Activated B cell treated with CpG ODN at 0.5 μM for 24 hours (primary cell): ENCODE measurements at regions of chr12 and their contacts with region 1.

Region 1: GRCh38 chr12:46372544-46373110 is at the start of gene SLC38A2:
- DNase-seq: peak; percentile 97
- ATAC-seq: peak; percentile 88
- H3K4me3 Mint-ChIP-seq: peak within 1 kb of the TSS; percentile 96
- H3K27ac Mint-ChIP-seq: peak within 1 kb of the TSS; percentile 99
- H3K4me1 Mint-ChIP-seq: peaks cover 46% of the 10 kb centered on the region
- H3K27me3 Mint-ChIP-seq: no peaks in the 10 kb centered on the region
- CTCF ChIP-seq: no peak
- total RNA-seq, gene SLC38A2: 231 and 247 TPM in 2 replicates

Region 2: DNA sequence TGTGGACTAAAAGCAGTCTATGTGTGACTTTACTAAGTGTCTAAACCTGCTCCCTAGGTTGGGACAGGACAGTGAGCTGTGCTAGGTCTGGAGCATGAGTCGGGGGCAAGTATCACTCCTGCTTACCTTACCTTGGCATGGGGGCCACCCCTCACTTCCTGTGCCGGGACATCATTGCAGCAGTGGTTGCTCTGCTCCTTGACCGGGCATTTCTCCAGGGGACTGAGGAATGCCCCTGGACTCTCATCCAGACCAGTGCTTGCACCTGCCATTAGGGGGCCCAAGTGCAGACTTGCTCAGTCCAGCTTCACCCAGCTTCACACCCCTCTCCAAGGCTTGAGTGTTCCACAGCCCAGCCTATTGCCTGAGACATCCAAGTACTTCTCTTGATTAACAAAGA is 1411.8 kb before region 1 on chr12:
- CTCF ChIA-PET with region 1: no interaction called
- POLR2A ChIA-PET with region 1: no interaction called
- intact Hi-C with region 1: no loop called
- DNase-seq: no peak
- ATAC-seq: no peak
- H3K4me3 Mint-ChIP-seq: no peak overlapping the region
- H3K27ac Mint-ChIP-seq: no peak overlapping the region
- H3K4me1 Mint-ChIP-seq: no peaks in the 10 kb centered on the region
- H3K27me3 Mint-ChIP-seq: no peaks in the 10 kb centered on the region
- CTCF ChIP-seq: no peak

Region 3: DNA sequence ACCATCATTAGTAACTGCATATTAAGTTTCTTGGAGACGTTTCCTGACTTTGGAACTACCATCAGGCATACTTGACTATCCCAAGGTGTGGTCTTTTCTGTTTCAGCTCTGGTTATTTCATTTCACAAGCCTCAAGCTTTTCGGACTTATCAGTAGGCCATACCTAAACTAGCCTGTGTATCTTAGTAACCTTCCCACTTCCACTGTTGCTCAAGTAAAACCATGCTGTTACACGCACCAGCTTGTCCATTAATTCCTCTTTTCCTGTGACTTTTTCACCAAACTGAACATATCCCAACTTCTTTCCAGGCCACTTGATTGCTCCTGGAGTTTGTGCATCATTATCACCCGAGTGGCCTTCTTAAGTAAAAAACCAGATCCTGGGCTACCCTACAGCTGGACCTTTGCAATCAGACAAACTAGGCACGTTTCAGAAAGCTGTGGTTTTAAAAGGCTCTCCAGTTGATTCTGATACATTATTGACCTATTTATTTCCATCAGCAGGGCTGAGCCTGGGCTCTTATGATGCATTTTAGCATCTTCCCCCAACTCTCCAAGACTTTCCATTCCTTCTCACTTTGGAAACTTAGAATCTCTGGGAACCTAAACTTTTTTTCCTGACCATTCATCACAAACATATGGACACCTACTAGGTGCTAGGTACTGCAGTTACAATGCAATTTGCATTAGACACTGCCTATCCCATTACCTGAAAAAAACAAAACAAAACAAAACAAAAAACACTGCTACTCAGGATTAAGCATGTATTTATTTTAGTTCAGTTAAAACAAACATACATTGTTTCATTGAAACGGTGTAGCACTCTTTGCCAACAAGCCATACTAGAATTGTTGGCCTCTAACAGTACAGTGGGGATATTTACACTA is 14.9 kb before region 1 on chr12:
- CTCF ChIA-PET with region 1: interaction called, 3 read pairs
- POLR2A ChIA-PET with region 1: interaction called, 5 read pairs
- intact Hi-C with region 1: loop called (anchors 1 kb)
- DNase-seq: no peak
- ATAC-seq: no peak
- H3K4me3 Mint-ChIP-seq: no peak overlapping the region
- H3K27ac Mint-ChIP-seq: no peak overlapping the region
- H3K4me1 Mint-ChIP-seq: peaks cover 32% of the 10 kb centered on the region
- H3K27me3 Mint-ChIP-seq: no peaks in the 10 kb centered on the region
- CTCF ChIP-seq: no peak

Region 4: DNA sequence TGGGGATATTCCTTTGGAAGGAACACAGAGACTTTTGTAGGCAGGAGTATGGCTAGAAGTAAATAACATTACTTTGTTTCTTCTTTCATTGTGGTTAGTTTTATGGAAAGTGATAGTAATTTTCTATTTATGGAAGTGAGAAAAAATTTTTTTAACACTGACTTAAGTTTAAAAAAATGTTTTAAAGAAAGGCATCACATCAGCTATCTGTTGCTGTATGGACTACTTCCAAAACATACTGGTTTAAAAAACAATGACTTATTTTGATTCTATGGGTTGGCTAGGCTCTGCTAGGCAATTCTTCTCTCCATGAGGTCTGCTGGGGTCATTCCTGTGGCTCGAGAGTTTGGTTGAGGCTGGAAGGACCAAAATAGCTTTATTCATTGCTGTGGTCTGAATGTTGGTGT is 31.6 kb after region 1 on chr12:
- CTCF ChIA-PET with region 1: no interaction called
- POLR2A ChIA-PET with region 1: no interaction called
- intact Hi-C with region 1: loop called (anchors 2 kb)
- DNase-seq: no peak
- ATAC-seq: no peak
- H3K4me3 Mint-ChIP-seq: no peak overlapping the region
- H3K27ac Mint-ChIP-seq: no peak overlapping the region
- H3K4me1 Mint-ChIP-seq: peaks cover 48% of the 10 kb centered on the region
- H3K27me3 Mint-ChIP-seq: no peaks in the 10 kb centered on the region
- CTCF ChIP-seq: no peak

Region 5: DNA sequence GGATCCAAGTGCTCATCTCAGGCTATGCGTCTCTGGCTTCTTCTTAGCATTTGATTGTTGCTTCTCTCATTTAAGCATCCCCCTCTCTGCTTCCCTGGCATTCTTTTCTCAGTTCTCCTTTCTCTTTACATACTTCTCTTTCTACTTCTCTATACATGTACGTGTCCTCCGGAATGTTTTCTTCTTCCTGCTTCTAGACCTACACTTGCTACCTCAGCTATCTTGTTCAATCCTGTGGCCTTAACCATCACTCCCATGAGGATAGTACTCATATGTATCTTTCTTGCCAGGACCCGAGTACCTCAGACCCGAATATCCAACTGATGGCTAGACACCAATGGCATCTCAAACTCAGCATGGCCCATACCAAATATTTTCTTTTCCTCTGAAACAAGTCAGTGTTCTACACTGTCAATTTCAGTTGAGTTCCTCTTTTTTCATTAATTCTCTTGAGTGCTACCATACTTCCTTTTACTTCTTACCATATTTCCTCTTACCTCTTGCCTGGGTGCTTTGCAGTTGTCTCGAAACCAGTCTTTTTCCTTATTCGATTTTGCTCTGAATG is 115.0 kb after region 1 on chr12:
- CTCF ChIA-PET with region 1: no interaction called
- POLR2A ChIA-PET with region 1: no interaction called
- intact Hi-C with region 1: loop called (anchors 1 kb)
- DNase-seq: no peak
- ATAC-seq: peak; percentile 92
- H3K4me3 Mint-ChIP-seq: no peak overlapping the region
- H3K27ac Mint-ChIP-seq: no peak overlapping the region
- H3K4me1 Mint-ChIP-seq: peaks cover 10% of the 10 kb centered on the region
- H3K27me3 Mint-ChIP-seq: no peaks in the 10 kb centered on the region
- CTCF ChIP-seq: no peak

Region 6: GRCh38 chr12:47312808-47313426 is 940.3 kb after region 1 on chr12:
- CTCF ChIA-PET with region 1: no interaction called
- POLR2A ChIA-PET with region 1: no interaction called
- intact Hi-C with region 1: loop called (anchors 5 kb)
- DNase-seq: no peak
- ATAC-seq: peak; percentile 82
- H3K4me3 Mint-ChIP-seq: peak overlapping the region; percentile 29
- H3K27ac Mint-ChIP-seq: peak overlapping the region; percentile 88
- H3K4me1 Mint-ChIP-seq: peaks cover 77% of the 10 kb centered on the region
- H3K27me3 Mint-ChIP-seq: no peaks in the 10 kb centered on the region
- CTCF ChIP-seq: no peak